Mammary epithelial cell (primary cell): ENCODE measurements at regions of chr18 and their contacts with region 1.

Region 1: GRCh38 chr18:50492097-50492496 is 67.8 kb upstream of the MAPK4 start:
- DNase-seq: no peak
- H3K4me3 ChIP-seq: no peak overlapping the region
- H3K27ac ChIP-seq: no peak overlapping the region
- H3K4me1 ChIP-seq: no peaks in the 10 kb centered on the region
- H3K27me3 ChIP-seq: no peaks in the 10 kb centered on the region
- CTCF ChIP-seq: no peak

Region 2: DNA sequence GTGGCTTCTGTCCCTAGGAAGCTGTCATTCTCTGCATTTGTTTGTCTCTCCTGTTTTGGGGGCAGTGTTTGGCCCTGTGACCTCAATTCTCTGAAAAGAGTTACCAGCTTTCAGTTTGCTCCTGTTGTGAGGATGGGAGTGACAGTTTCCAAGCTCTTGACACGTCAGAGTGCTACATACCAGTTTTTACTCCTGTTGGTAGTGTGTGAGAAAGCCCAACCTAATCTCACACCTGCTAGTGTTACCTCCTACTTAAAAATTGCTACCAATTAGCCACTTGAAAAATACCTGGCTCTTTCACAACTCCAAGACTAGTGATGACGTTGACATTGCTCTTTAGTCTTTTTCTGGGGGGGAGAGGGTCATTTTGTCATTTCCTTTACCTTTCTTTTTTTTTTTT is 103.1 kb before region 1 on chr18:
- CTCF ChIA-PET with region 1: no interaction called
- dilution Hi-C with region 1: no loop called
- in situ Hi-C with region 1: no loop called
- intact Hi-C with region 1: no loop called
- DNase-seq: no peak
- H3K4me3 ChIP-seq: no peak overlapping the region
- H3K27ac ChIP-seq: no peak overlapping the region
- H3K4me1 ChIP-seq: no peaks in the 10 kb centered on the region
- H3K27me3 ChIP-seq: no peaks in the 10 kb centered on the region
- CTCF ChIP-seq: no peak

Region 3: DNA sequence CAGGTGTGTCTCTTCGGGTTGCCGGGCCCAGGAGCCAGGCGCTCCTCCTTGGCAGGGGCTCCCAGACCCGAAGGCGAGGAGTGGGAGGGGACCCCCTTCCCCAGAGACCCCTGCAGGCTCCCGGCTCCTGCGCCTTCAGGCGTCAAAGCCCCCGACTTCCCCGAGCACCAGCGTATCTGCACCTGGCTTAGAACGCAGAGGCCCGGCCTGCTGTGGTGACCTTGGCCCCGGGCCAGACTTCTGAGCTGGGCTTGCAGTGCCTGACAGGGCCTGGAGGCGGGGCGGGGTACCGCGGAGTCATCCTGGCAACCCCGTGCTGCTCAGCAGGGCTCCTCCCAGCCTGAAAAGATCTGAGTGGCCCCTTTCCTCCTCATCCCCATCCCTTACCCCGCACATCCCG is 90.2 kb before region 1 on chr18:
- CTCF ChIA-PET with region 1: no interaction called
- dilution Hi-C with region 1: loop called (anchors 5 kb)
- in situ Hi-C with region 1: no loop called
- intact Hi-C with region 1: no loop called
- DNase-seq: peak; percentile 50
- H3K4me3 ChIP-seq: no peak overlapping the region
- H3K27ac ChIP-seq: no peak overlapping the region
- H3K4me1 ChIP-seq: peaks cover 3% of the 10 kb centered on the region
- H3K27me3 ChIP-seq: no peaks in the 10 kb centered on the region
- CTCF ChIP-seq: peak in 1 of 2 donors; percentile 25

Region 4: DNA sequence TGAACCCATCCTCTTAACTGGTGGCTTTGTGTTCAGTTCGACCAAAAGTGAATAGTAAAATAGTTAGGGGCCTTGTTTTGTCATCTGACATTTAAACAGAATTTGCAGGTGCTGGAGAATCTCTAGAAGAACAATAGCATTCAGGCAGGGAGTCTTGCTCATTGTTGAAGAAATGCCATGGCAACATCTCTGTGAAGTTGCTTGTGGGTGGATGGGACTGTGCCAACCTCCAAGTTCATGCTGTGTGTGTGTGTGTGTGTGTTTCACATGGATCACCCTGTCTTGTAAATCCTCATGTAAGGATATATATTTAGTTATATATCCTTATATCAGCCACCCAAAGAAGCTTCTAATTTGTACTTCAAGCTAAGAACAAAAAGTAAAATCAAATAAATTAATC is 50.6 kb before region 1 on chr18:
- CTCF ChIA-PET with region 1: interaction called, 4 read pairs
- dilution Hi-C with region 1: loop called (anchors 10 kb)
- in situ Hi-C with region 1: no loop called
- intact Hi-C with region 1: no loop called
- DNase-seq: peak; percentile 28
- H3K4me3 ChIP-seq: no peak overlapping the region
- H3K27ac ChIP-seq: no peak overlapping the region
- H3K4me1 ChIP-seq: no peaks in the 10 kb centered on the region
- H3K27me3 ChIP-seq: no peaks in the 10 kb centered on the region
- CTCF ChIP-seq: no peak